Endothelial cell of umbilical vein (primary cell): ENCODE measurements at regions of chr10 and their contacts with region 1.

Region 1: GRCh38 chr10:3102720-3103427 is 35.5 kb downstream of the PFKP start:
- DNase-seq: peak; percentile 93
- H3K4me3 ChIP-seq: no peak overlapping the region
- H3K27ac ChIP-seq: peak overlapping the region; percentile 96
- H3K4me1 ChIP-seq: peaks cover 14% of the 10 kb centered on the region
- H3K27me3 ChIP-seq: no peaks in the 10 kb centered on the region
- CTCF ChIP-seq: no peak
- POLR2A ChIP-seq: no peak

Region 2: DNA sequence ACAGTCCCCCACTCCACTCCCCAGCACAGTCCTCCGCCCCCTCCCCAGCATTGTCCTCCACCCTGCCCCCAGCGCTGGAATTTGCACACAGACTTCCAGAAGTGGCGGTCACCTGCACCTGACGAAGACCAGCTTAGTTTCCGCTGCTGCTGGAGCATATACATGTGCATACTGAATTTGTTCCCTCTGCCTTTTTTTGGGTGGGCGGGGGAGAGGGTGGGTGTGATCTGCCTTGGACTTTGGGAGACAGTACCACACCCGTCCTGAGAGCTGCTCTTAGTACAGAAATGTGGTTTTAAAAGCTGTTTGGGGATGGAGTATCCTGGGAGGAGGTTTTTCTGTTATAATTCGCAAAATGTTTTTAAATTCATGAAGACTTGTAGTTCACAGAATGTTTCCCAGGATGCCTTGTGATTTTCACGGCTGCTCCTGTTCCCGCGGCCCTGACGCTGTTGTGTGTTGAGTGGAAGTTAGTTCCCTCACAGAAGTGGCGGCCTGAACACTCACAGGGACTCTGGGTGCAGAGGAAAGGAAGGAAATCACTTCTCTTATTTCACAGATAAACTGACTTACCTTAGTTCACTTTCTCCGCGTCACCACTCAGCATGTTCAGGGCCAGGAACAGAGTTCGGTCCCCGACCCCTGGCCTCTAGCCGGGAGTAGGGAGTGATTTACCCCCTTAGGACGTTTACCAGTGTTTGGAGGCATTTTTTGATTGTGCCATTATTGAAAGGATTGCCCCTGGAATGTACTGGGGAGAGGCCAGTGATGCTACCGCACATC is 16.9 kb before region 1 on chr10:
- CTCF ChIA-PET with region 1: interaction called, 10 read pairs
- POLR2A ChIA-PET with region 1: no interaction called
- dilution Hi-C with region 1: no loop called
- intact Hi-C with region 1: no loop called
- DNase-seq: peak; percentile 44
- H3K4me3 ChIP-seq: no peak overlapping the region
- H3K27ac ChIP-seq: peak overlapping the region; percentile 70
- H3K4me1 ChIP-seq: peaks cover 37% of the 10 kb centered on the region
- H3K27me3 ChIP-seq: no peaks in the 10 kb centered on the region
- CTCF ChIP-seq: no peak
- POLR2A ChIP-seq: no peak

Region 3: GRCh38 chr10:3162533-3162932 is 59.7 kb after region 1 on chr10:
- CTCF ChIA-PET with region 1: no interaction called
- POLR2A ChIA-PET with region 1: no interaction called
- dilution Hi-C with region 1: no loop called
- intact Hi-C with region 1: no loop called
- DNase-seq: no peak
- H3K4me3 ChIP-seq: no peak overlapping the region
- H3K27ac ChIP-seq: no peak overlapping the region
- H3K4me1 ChIP-seq: no peaks in the 10 kb centered on the region
- H3K27me3 ChIP-seq: no peaks in the 10 kb centered on the region
- CTCF ChIP-seq: no peak
- POLR2A ChIP-seq: no peak